ENCODE measurements at regions of chr5 and their contacts with region 1.

Region 1: GRCh38 chr5:172943283-172943841 is 15.9 kb upstream of the RPL26L1 start:
- DNase-seq: no peak
- ATAC-seq: no peak
- H3K4me3 ChIP-seq: no peak overlapping the region
- H3K27ac ChIP-seq: no peak overlapping the region
- H3K4me1 ChIP-seq: no peaks in the 10 kb centered on the region
- H3K27me3 ChIP-seq: no peaks in the 10 kb centered on the region
- CTCF ChIP-seq: no peak
- POLR2A ChIP-seq: no peak

Region 2: DNA sequence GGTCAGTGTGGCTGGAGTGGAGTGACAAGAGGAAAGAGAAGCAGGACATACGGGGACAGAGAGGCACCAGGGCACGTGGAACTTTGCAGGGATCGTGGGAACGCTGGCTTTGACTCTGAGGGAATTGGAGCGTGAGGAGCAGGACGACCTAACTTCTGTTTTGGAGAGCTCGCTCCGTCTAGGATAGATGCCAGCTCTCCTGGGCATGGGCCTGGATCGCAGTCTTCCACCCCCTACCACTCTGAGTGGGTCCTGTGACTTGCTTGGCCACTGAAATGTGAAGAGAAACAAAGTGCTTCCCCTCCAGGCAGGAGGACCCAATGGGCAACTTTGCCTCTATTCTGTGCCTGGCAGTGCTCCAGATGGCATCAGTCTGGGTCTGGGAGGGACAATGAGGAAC is 480.3 kb before region 1 on chr5:
- in situ Hi-C with region 1: loop called in 3 of 4 experiments (anchors 10 to 25 kb)
- intact Hi-C with region 1: loop called (anchors 10 kb)
- DNase-seq: no peak
- ATAC-seq: no peak
- H3K4me3 ChIP-seq: no peak overlapping the region
- H3K27ac ChIP-seq: no peak overlapping the region
- H3K4me1 ChIP-seq: no peaks in the 10 kb centered on the region
- H3K27me3 ChIP-seq: no peaks in the 10 kb centered on the region
- CTCF ChIP-seq: no peak
- POLR2A ChIP-seq: no peak

Region 3: GRCh38 chr5:172999372-172999973 is 56.1 kb after region 1 on chr5:
- in situ Hi-C with region 1: no loop called
- intact Hi-C with region 1: no loop called
- DNase-seq: no peak
- ATAC-seq: peak; percentile 46 to 66
- H3K4me3 ChIP-seq: no peak overlapping the region
- H3K27ac ChIP-seq: peak overlapping the region in 3 of 4 donors; percentile 27 to 49 (median 42)
- H3K4me1 ChIP-seq: peaks cover 27% of the 10 kb centered on the region in 2 donors
- H3K27me3 ChIP-seq: no peaks in the 10 kb centered on the region
- CTCF ChIP-seq: no peak
- POLR2A ChIP-seq: no peak